ENCODE measurements at regions of chr9 and their contacts with region 1.

Region 1: GRCh38 chr9:75010570-75010969 is 17.5 kb downstream of the CARNMT1 start:
- DNase-seq: no peak
- H3K4me3 ChIP-seq: no peak overlapping the region
- H3K27me3 ChIP-seq: no peaks in the 10 kb centered on the region
- CTCF ChIP-seq: no peak

Region 2: GRCh38 chr9:74505212-74505611 is 505.4 kb before region 1 on chr9:
- CTCF ChIA-PET with region 1: no interaction called
- POLR2A ChIA-PET with region 1: interaction called, 18 read pairs
- DNase-seq: no peak
- H3K4me3 ChIP-seq: no peak overlapping the region
- H3K27me3 ChIP-seq: peaks cover 4% of the 10 kb centered on the region
- CTCF ChIP-seq: no peak

Region 3: GRCh38 chr9:74920944-74921626 is 89.5 kb before region 1 on chr9:
- CTCF ChIA-PET with region 1: no interaction called
- POLR2A ChIA-PET with region 1: no interaction called
- DNase-seq: no peak
- H3K4me3 ChIP-seq: no peak overlapping the region
- H3K27me3 ChIP-seq: no peaks in the 10 kb centered on the region
- CTCF ChIP-seq: no peak